ENCODE measurements at regions of chr5 and their contacts with region 1.

Region 1: GRCh38 chr5:60960591-60960990 is 15.6 kb downstream of the NDUFAF2 start:
- DNase-seq: no peak
- ATAC-seq: no peak
- H3K4me3 ChIP-seq: no peak overlapping the region
- H3K27ac ChIP-seq: no peak overlapping the region
- H3K4me1 ChIP-seq: no peaks in the 10 kb centered on the region
- H3K27me3 ChIP-seq: no peaks in the 10 kb centered on the region

Region 2: DNA sequence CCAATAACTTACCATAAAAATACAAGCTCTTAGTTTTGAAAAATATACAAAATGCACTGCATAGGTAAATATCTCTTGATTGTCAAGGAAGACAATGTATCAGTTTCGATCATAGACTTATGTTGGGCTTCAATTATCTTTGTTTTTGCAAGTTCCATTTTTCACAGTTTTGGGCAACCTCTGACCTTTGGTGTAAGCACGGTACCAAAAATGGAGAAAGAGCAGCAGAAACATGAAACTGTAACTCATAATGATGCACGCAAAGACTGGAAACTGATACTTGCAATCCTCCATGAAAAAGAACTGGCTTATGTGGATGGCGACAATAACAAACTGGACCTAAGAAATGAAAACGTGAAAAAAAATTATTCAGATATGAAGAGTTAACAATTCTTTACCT is 206.1 kb before region 1 on chr5:
- intact Hi-C with region 1: no loop called
- DNase-seq: no peak
- ATAC-seq: no peak
- H3K4me3 ChIP-seq: no peak overlapping the region
- H3K27ac ChIP-seq: no peak overlapping the region
- H3K4me1 ChIP-seq: no peaks in the 10 kb centered on the region
- H3K27me3 ChIP-seq: peaks cover 0 to 2% of the 10 kb centered on the region in 2 donors

Region 3: DNA sequence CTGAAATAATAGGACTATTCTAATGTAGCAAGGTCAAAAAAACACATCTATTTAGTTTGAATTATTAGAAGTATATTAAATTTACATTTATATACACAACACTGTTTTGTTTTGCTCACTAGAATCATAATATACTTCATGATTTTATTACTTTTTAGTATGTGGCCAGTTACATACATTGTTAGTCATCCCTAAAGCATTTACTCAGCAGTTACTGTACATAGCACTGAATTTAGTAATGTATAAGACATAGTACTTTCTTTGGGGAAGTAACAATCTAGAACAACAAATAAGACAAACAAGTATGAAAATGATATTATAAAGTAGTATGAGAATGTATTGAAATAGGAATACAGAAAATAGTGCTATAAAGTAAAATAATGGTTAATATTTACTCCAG is 43.9 kb before region 1 on chr5:
- intact Hi-C with region 1: no loop called
- DNase-seq: no peak
- ATAC-seq: no peak
- H3K4me3 ChIP-seq: no peak overlapping the region
- H3K27ac ChIP-seq: no peak overlapping the region
- H3K4me1 ChIP-seq: no peaks in the 10 kb centered on the region
- H3K27me3 ChIP-seq: no peaks in the 10 kb centered on the region

Region 4: GRCh38 chr5:61162010-61162831 is 201.6 kb after region 1 on chr5 and contains the start of gene SMIM15:
- intact Hi-C with region 1: loop called in 1 of 2 experiments (anchors 10 kb)
- DNase-seq: peak; percentile 94 to 95
- ATAC-seq: peak; percentile 97
- H3K4me3 ChIP-seq: peak within 1 kb of the TSS; percentile 49 to 67
- H3K27ac ChIP-seq: peak within 1 kb of the TSS in 1 of 2 donors; percentile 52
- H3K4me1 ChIP-seq: peaks cover 3 to 6% of the 10 kb centered on the region in 2 donors
- H3K27me3 ChIP-seq: no peaks in the 10 kb centered on the region
- total RNA-seq, gene SMIM15: 33.3 to 41.1 TPM

Region 5: DNA sequence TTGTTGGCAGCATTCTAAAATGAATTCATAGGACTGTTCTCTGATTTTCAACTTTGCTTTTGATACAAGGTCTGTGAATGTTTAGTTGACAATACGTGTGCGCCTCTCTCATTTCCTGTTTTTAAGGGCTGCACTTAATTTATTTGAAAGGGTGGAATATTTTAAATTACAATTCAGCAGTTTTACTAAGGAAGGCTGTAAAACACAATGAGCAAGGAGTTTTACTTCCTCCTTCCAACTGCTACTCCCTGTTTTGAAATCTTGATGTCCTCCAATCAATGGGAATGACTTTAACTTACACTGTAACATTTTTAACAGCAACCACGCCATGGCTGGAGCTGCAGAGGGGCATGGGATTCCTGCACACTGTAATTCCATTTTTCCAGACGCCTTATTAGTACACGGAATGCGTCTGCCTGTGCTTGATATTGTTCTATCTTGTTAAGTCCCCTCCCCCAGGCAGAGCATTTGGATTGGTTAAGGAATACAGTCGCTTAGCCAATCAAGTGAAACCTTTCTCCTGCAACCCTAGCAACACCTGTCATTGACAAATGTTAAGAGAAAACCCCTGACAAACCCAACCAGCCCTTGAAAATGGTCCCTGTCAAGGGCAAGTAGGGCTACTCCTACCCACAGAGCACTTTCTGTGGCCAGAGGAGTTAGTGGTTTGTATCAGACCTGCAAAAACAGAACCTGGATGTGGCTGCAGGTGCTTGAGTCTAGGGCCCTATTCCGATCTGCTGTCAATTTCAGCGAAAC is 359.0 kb after region 1 on chr5:
- intact Hi-C with region 1: loop called in 1 of 2 experiments (anchors 10 kb)
- DNase-seq: no peak
- ATAC-seq: no peak
- H3K4me3 ChIP-seq: no peak overlapping the region
- H3K27ac ChIP-seq: no peak overlapping the region
- H3K4me1 ChIP-seq: peaks cover 1 to 5% of the 10 kb centered on the region in 2 donors
- H3K27me3 ChIP-seq: no peaks in the 10 kb centered on the region

Region 6: DNA sequence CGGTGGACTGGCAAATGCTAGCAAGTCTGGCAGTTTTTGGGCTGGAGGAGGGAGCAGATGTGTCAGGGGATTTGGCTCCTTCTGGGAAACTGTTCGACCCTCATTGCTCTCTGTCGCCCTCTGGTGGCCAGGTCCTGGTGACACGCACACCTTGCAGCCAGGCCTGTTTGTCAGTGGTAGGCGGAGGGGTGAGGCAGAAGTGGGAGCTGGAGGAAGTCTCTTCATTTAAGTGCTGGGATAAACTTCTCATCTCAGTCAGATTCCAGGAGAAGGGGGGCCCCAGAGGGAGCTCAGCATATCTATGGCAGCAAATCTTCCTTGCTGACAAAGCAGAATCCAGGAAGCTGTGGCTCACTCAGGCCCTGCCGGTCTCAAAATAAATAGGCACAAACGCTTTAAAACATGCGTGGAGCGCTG is 698.0 kb after region 1 on chr5:
- intact Hi-C with region 1: loop called in 1 of 2 experiments (anchors 5 kb)
- DNase-seq: peak; percentile 86 to 96
- ATAC-seq: peak; percentile 82
- H3K4me3 ChIP-seq: no peak overlapping the region
- H3K27ac ChIP-seq: no peak overlapping the region
- H3K4me1 ChIP-seq: no peaks in the 10 kb centered on the region
- H3K27me3 ChIP-seq: no peaks in the 10 kb centered on the region

Region 7: DNA sequence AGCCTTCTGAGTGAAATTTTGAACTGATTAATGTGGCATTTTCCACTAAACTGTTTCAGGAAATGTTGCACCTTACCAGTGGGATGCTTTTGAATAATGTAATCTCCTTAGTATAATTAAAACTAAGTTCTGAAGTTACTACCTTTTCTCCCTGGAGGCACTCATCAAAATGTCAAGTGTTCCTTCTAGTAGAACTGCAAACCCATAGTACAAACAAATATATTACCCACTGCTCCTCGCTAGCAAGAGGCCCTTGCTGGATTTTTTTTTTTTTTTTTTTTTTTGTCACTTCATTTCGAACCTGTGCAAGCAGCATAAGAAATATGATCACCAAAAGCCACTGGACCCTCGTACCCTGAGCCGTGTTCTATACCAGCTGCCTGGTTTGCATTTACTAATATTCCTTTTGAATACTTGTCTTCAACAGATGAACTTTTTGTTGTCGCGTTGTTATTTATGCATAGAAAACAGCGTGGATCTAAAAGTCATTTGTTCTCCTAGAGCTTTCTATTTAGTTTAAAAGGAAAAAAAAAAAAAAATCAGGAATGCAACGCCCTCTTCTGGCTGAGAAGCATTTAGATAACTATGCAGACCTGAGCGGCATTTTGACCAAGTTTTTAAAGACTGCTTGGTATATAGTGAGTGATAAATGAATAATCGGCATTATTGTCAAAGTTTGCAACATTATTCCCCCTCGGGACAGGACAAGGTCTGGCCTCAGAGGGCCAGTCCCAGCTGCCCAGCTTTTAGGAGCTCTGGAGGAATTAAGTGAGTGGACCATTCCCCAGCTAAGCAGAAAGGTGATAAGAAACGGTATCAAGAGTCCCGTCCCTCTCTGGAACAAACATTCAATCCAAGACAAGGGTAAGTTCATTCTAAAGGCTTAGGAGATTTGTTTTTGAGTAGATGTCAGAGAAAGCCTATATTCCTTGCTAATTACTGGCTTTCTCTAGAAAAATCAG is 1183.0 kb after region 1 on chr5:
- intact Hi-C with region 1: loop called in 1 of 2 experiments (anchors 5 kb)
- DNase-seq: no peak
- ATAC-seq: peak; percentile 72
- H3K4me3 ChIP-seq: peak overlapping the region in 1 of 2 donors; percentile 64
- H3K27ac ChIP-seq: no peak overlapping the region
- H3K4me1 ChIP-seq: peaks cover 2 to 10% of the 10 kb centered on the region in 2 donors
- H3K27me3 ChIP-seq: no peaks in the 10 kb centered on the region